PC-3 (cell line): ENCODE measurements at regions of chr11 and their contacts with region 1.

Region 1: DNA sequence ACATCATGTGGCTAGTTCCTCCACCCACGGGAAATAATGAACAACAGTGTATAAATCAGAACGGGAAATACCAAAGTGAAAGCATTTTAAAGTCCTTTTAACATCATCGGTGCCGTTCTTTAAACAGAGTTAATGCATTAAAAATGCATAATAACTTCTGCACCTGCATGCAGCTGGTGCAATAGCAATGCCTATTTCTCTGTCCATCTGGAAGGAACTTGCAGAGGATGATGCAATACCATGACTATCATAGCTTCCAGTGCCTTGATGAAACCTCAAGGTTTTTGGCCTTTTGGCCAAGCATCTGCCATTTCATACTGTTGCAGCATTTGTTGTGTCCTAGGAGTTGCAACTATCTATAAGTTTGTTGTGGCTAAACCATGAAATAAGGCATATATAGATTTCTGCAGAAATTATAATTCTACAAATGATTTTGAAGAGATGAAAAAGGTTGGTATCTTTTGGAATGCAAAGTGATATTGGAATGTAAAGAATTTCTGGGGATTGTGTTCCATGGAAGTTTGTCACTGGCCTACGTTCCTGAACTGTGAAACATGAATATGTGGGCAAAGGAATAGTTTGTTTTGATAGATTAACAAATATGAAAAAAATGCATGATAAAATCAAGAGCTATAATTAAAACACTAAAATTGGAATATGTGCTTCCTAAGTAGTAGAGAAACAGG is 9.8 kb upstream of the EIF3F start:
- DNase-seq: peak; percentile 79
- ATAC-seq: peak; percentile 69
- H3K4me3 ChIP-seq: peak overlapping the region; percentile 51
- H3K27ac ChIP-seq: peak overlapping the region; percentile 25
- H3K4me1 ChIP-seq: peaks cover 46% of the 10 kb centered on the region
- H3K27me3 ChIP-seq: no peaks in the 10 kb centered on the region
- CTCF ChIP-seq: no peak

Region 2: GRCh38 chr11:7871056-7871455 is 106.3 kb before region 1 on chr11:
- CTCF ChIA-PET with region 1: no interaction called
- POLR2A ChIA-PET with region 1: no interaction called
- intact Hi-C with region 1: no loop called
- DNase-seq: no peak
- ATAC-seq: no peak
- H3K4me3 ChIP-seq: no peak overlapping the region
- H3K27ac ChIP-seq: no peak overlapping the region
- H3K4me1 ChIP-seq: no peaks in the 10 kb centered on the region
- H3K27me3 ChIP-seq: no peaks in the 10 kb centered on the region
- CTCF ChIP-seq: no peak

Region 3: DNA sequence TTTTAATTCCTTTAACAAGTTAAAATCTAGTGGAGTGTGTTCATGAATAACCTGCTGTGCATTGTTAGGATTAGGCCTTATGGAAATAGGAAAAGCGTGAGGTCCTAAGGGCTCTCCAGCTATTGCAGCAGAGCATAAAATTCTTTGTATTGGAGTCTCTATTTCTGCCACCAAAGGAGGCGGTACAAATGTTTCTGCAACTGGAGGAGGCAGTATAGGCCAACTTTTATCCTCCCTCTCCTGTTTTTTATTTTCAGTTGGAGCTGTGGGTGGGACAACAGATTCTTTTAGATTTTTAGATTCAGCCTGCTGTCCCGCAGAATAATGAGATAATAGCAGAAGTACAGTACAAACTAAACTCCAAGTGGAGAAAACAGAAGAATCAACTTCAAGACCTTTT is 72.5 kb before region 1 on chr11:
- CTCF ChIA-PET with region 1: interaction called, 5 read pairs
- POLR2A ChIA-PET with region 1: no interaction called
- intact Hi-C with region 1: loop called (anchors 2 kb)
- DNase-seq: peak; percentile 66
- ATAC-seq: no peak
- H3K4me3 ChIP-seq: peak overlapping the region; percentile 52
- H3K27ac ChIP-seq: peak overlapping the region; percentile 44; the same call in 1 of the 2 replicates
- H3K4me1 ChIP-seq: peaks cover 68% of the 10 kb centered on the region
- H3K27me3 ChIP-seq: no peaks in the 10 kb centered on the region
- CTCF ChIP-seq: peak; percentile 59

Region 4: GRCh38 chr11:8099291-8099899 is 122.0 kb after region 1 on chr11:
- CTCF ChIA-PET with region 1: no interaction called
- POLR2A ChIA-PET with region 1: no interaction called
- intact Hi-C with region 1: no loop called
- DNase-seq: peak; percentile 83
- ATAC-seq: peak; percentile 89
- H3K4me3 ChIP-seq: no peak overlapping the region
- H3K27ac ChIP-seq: no peak overlapping the region
- H3K4me1 ChIP-seq: no peaks in the 10 kb centered on the region
- H3K27me3 ChIP-seq: no peaks in the 10 kb centered on the region
- CTCF ChIP-seq: peak; percentile 88